ENCODE measurements at regions of chr17 and their contacts with region 1.

Region 1: GRCh38 chr17:82037113-82037888 is at the start of gene DCXR:
- DNase-seq: peak; percentile 87 to 97 (median 93)
- ATAC-seq: peak; percentile 96
- H3K4me3 ChIP-seq: peak within 1 kb of the TSS; percentile 71
- H3K4me3 Mint-ChIP-seq: peak within 1 kb of the TSS; percentile 82 to 94 (median 89)
- H3K27ac ChIP-seq: peak within 1 kb of the TSS; percentile 75
- H3K27ac Mint-ChIP-seq: peak within 1 kb of the TSS; percentile 61 to 94 (median 90)
- H3K4me1 ChIP-seq: peaks cover 7% of the 10 kb centered on the region in 2 donors
- H3K4me1 Mint-ChIP-seq: peaks cover 14 to 29% (median 24%) of the 10 kb centered on the region in 7 donors
- H3K27me3 ChIP-seq: no peaks in the 10 kb centered on the region
- H3K27me3 Mint-ChIP-seq: no peaks in the 10 kb centered on the region
- total RNA-seq, gene DCXR: 63.0 to 130 (median 83.6) TPM

Region 2: GRCh38 chr17:81683584-81684237 is 353.6 kb before region 1 on chr17 and contains the starts of genes ARL16 and HGS:
- CTCF ChIA-PET with region 1: no interaction called
- POLR2A ChIA-PET with region 1: interaction called, 3 read pairs
- intact Hi-C with region 1: loop called in 1 of 2 experiments (anchors 10 kb)
- DNase-seq: peak; percentile 91 to 98 (median 97)
- ATAC-seq: peak; percentile 98
- H3K4me3 ChIP-seq: peak within 1 kb of the TSS; percentile 76
- H3K4me3 Mint-ChIP-seq: peak within 1 kb of the TSS; percentile 88 to 99 (median 96)
- H3K27ac ChIP-seq: peak within 1 kb of the TSS; percentile 84
- H3K27ac Mint-ChIP-seq: peak within 1 kb of the TSS; percentile 83 to 97 (median 95)
- H3K4me1 ChIP-seq: peaks cover 22 to 24% of the 10 kb centered on the region in 2 donors
- H3K4me1 Mint-ChIP-seq: peaks cover 22 to 49% (median 40%) of the 10 kb centered on the region in 7 donors
- H3K27me3 ChIP-seq: no peaks in the 10 kb centered on the region
- H3K27me3 Mint-ChIP-seq: peaks cover 0 to 3% (median 0%) of the 10 kb centered on the region in 5 donors
- total RNA-seq, gene ARL16: 12.0 to 30.6 (median 30.1) TPM
- total RNA-seq, gene HGS: 108 to 174 (median 153) TPM

Region 3: GRCh38 chr17:82051776-82052637 is 14.7 kb after region 1 on chr17 and contains the starts of genes GPS1 and RFNG:
- CTCF ChIA-PET with region 1: interaction called, 6 read pairs
- POLR2A ChIA-PET with region 1: interaction called, 5 read pairs
- intact Hi-C with region 1: loop called (anchors 1 kb)
- DNase-seq: peak; percentile 68 to 87 (median 80)
- ATAC-seq: peak; percentile 91
- H3K4me3 ChIP-seq: peak within 1 kb of the TSS; percentile 74
- H3K4me3 Mint-ChIP-seq: peak within 1 kb of the TSS; percentile 60 to 92 (median 86)
- H3K27ac ChIP-seq: peak within 1 kb of the TSS; percentile 72
- H3K27ac Mint-ChIP-seq: peak within 1 kb of the TSS in 8 of 9 donors; percentile 51 to 91 (median 78)
- H3K4me1 ChIP-seq: peaks cover 18 to 31% of the 10 kb centered on the region in 2 donors
- H3K4me1 Mint-ChIP-seq: peaks cover 5 to 28% (median 13%) of the 10 kb centered on the region in 7 donors
- H3K27me3 ChIP-seq: no peaks in the 10 kb centered on the region
- H3K27me3 Mint-ChIP-seq: no peaks in the 10 kb centered on the region
- total RNA-seq, gene GPS1: 68.3 to 88.1 (median 71.7) TPM
- total RNA-seq, gene RFNG: 25.0 to 45.5 (median 31.5) TPM

Region 4: DNA sequence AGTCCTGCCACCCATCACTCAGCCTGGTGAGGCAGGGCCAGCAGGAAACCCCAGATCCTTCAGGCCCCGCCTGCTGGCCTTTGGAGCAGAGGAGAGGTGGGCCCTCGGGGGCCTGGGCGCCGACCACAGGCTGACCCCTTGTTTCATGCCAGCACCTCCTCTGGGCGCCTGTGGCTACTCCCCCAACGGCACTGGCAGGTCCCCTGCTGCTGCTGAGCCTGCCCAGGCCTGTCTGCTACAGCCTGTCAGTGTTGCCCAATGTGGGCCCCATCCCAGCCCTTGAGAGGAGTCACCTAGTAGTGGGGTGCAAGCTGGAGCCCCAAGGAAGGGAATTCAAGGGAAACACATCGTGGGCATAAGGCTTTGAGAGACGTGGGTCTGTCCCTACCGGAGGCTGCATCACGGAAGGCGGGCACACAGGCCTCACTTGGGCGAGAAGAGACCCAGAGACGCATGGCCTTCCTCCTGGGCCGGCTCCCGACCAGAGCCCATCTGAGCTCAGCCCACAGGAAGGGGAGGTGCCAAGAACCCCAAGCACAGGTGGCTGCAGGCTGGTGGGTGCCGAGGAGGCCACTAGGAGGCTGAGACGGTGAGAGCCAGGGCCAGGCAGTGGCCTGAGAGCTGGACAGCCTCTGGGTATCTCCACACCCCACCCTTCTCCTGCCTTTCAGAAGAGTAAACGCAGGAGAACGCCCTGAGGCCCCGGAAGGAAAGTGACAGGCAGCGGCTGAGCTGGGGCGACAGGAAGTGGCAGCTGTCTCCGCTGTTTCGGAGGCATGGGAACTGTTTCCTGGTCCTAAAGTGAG is 68.8 kb after region 1 on chr17:
- CTCF ChIA-PET with region 1: interaction called, 3 read pairs
- POLR2A ChIA-PET with region 1: interaction called, 10 read pairs
- intact Hi-C with region 1: no loop called
- DNase-seq: peak; percentile 14 to 69 (median 56)
- ATAC-seq: peak; percentile 89
- H3K4me3 ChIP-seq: peak overlapping the region; percentile 73
- H3K4me3 Mint-ChIP-seq: peak overlapping the region; percentile 87 to 94 (median 90)
- H3K27ac ChIP-seq: peak overlapping the region; percentile 89
- H3K27ac Mint-ChIP-seq: peak overlapping the region; percentile 95 to 99 (median 97)
- H3K4me1 ChIP-seq: peaks cover 17 to 25% of the 10 kb centered on the region in 2 donors
- H3K4me1 Mint-ChIP-seq: peaks cover 18 to 44% (median 32%) of the 10 kb centered on the region in 7 donors
- H3K27me3 ChIP-seq: no peaks in the 10 kb centered on the region
- H3K27me3 Mint-ChIP-seq: no peaks in the 10 kb centered on the region

Region 5: DNA sequence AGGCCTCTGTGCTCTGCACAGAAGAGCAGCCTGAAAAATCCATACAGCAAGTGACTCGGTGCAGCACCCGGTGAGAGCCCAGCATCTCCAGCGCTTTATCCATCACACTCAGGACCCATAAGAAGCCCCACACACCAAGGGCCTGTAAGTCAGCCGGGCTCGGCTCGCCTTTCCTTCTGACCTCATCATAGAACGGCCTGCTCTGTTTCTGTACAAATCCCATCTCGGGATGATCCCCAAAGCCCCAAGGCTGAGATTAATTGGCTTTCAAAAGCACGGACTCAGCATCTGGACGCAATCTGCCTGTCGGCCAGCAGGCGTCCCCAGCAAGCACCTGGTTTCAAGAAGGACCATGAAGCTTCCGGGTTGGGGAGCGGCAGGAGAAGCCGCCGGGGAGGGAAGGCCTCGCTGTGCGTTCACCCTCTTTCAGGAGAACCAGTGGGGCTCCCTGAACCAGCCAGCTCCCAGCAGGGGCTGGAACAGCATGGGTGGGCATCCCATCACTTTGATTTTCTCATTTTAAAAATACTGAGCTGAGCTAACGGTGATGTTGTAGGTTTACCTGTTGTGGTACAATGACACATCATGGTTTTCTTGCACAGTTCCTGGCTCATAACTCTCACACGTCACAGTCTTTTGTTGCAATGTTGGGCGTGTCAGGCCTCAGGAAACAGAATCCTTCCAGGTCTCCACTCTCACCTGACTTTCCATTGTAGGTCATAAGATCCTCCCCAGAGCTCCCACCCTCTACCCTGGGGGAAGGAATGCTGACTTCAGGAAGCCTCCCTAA is 168.6 kb after region 1 on chr17:
- CTCF ChIA-PET with region 1: interaction called, 3 read pairs
- POLR2A ChIA-PET with region 1: interaction called, 4 read pairs
- intact Hi-C with region 1: loop called in 1 of 2 experiments (anchors 5 kb)
- DNase-seq: peak; percentile 67 to 87 (median 82)
- ATAC-seq: peak; percentile 88
- H3K4me3 ChIP-seq: no peak overlapping the region
- H3K4me3 Mint-ChIP-seq: peak overlapping the region in 9 of 10 donors; percentile 45 to 71 (median 58)
- H3K27ac ChIP-seq: peak overlapping the region; percentile 64
- H3K27ac Mint-ChIP-seq: peak overlapping the region; percentile 87 to 98 (median 95)
- H3K4me1 ChIP-seq: peaks cover 14 to 22% of the 10 kb centered on the region in 2 donors
- H3K4me1 Mint-ChIP-seq: peaks cover 24 to 61% (median 43%) of the 10 kb centered on the region in 7 donors
- H3K27me3 ChIP-seq: no peaks in the 10 kb centered on the region
- H3K27me3 Mint-ChIP-seq: no peaks in the 10 kb centered on the region

Measured in naive thymus-derived CD4-positive, alpha-beta T cell (primary cell).